ENCODE measurements at regions of chr11 and their contacts with region 1.

Region 1: DNA sequence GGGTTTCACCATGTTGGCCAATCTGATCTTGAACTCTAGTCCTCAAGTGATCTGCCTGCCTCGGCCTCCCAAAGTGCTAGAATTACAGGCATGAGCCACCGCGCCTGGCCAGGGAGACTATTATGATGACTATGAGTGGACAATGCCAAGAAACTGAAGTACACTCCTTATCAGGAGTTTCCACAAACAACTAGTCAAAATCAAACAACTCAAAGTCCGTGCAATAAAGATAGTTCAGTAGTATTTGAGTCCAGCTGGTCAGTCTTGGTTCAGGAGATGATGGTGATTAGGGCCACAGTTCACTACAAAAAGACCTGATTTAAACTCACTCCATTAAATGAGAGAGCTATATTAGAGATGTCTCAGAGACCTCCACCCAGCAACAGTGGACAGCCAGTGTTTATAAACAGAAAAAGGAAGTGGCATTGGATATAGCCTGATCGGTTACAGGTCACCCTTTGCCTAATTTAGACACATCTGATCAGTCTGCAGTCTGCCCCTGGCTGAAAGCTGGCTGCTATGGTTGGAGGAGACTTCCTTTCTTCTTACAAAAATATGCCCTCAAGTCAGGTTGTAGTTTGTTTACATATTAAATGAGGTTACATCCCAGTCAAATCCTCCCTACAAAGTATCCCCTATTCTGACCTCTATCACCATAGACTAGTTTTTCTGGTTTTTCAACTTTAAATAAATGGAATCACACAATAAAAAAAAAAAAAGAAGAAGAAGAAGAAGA is 17.0 kb downstream of the CD3E start:
- DNase-seq: no peak
- H3K4me3 ChIP-seq: no peak overlapping the region
- H3K27ac ChIP-seq: no peak overlapping the region
- H3K4me1 ChIP-seq: no peaks in the 10 kb centered on the region
- H3K27me3 ChIP-seq: peaks cover 13% of the 10 kb centered on the region
- CTCF ChIP-seq: no peak

Region 2: GRCh38 chr11:118290923-118291322 is 30.6 kb before region 1 on chr11:
- CTCF ChIA-PET with region 1: interaction called, 17 read pairs
- POLR2A ChIA-PET with region 1: no interaction called
- intact Hi-C with region 1: no loop called
- DNase-seq: no peak
- H3K4me3 ChIP-seq: no peak overlapping the region
- H3K27ac ChIP-seq: no peak overlapping the region
- H3K4me1 ChIP-seq: no peaks in the 10 kb centered on the region
- H3K27me3 ChIP-seq: peaks cover 22% of the 10 kb centered on the region
- CTCF ChIP-seq: peak; percentile 34; the same call in 1 of the 2 replicates

Measured in A673 (cell line).